AG04450 (cell line): ENCODE measurements at regions of chr2 and their contacts with region 1.

Region 1: DNA sequence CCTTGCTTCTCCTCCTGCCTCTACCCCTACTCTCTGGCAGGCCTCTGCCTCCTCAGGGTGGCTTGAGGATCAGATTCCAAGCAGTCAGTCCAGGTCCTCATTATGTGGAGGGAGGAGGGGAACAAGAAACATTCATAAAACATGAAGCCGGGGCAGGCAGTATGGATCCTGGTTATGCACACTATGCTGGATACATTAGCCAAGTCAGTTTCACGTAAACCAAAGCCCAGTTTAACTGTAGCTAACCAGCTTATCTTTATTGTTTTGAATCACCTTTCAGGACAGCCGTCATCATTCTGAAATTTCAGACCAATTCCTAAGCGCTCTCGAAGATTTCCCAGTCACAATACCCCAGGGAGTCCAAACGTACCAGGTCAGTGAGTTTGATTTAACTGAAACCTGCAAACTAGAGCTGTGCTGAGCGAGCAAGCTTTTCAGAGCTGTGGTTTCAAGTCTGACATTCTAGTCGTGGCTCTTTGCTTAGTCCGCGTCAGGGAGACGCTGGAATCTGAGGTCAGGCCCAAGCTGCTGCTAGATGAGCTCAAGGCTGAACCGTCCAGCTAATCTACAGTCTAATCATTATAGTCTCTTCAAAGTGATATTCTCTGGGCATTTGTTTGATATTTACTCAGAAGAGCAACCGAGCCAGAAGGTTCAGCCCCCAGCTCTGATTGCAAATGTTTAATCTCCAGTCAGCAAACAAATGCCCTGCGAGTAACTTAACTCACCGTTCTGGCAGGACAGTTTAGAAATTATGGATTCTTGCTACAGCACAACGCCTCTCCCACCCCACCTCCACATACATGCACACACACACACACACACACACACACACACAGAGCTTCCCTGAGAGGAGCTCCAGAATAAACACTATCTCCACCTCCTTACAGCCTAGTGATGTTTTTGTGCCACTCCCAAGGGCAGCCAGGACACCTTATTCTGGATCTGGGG is 63.8 kb upstream of the BZW1 start:
- DNase-seq: peak; percentile 85
- H3K4me3 ChIP-seq: peak overlapping the region; percentile 14
- H3K27ac ChIP-seq: peak overlapping the region; percentile 88
- H3K27me3 ChIP-seq: no peaks in the 10 kb centered on the region
- CTCF ChIP-seq: no peak

Region 2: DNA sequence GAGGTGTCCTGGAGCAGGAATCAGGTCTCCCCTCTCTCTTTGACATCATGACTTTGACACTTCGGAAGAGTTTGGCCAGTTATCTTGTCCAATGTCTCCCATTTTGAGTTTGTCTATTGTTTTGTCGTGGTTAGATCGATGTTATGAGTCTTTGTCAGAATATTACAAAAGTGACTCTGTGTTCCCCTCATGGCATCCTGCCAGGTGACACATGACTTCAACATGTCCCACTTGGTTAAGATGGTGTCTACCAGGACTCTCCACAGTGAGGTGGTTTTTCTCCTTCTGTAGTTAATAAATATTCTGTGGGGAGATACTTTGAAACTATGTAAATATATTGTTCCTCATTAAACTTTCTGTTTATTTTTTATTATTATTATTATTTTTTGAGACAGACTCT is 12.9 kb before region 1 on chr2:
- CTCF ChIA-PET with region 1: interaction called, 45 read pairs
- POLR2A ChIA-PET with region 1: interaction called, 7 read pairs
- DNase-seq: no peak
- H3K4me3 ChIP-seq: no peak overlapping the region
- H3K27ac ChIP-seq: no peak overlapping the region
- H3K27me3 ChIP-seq: peaks cover 18% of the 10 kb centered on the region
- CTCF ChIP-seq: no peak

Region 3: DNA sequence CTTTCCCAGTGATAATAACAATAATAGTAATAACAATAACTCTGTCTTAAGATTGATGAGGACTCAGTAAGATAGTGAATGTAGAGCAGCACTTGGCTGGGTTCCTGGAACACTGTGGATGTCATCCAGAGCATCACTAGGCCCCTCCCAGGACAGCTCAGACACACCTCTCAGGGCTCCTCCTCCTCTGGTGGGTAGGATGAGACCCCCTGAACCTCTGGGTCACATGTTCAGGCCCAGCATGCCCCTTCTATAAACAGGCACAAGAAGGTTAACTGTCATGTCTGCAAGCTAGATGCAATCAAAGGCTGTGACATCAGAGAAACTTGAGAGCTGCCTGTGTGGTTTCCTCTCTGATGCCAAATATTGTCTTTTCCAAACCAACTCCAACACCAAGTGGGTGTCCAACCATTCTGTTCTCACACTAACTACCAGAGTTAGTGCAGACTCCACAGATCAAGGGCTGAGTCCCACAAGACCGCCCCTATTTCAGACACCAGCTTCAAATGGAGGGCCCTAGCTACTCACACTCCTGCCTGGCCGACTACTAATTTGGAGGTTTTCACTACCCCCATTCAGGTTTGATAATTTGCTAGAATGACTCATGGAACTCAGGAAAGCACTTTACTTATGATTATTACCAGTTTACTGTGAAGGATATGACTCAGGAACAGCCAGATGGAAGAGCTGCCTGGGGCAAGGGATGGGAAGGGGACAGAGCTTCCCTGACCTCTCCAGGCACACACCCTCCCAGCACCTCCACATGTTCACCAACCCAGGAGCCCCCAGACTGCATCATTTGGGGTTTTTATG is 17.4 kb after region 1 on chr2:
- CTCF ChIA-PET with region 1: interaction called, 3 read pairs
- POLR2A ChIA-PET with region 1: interaction called, 12 read pairs
- DNase-seq: peak; percentile 81
- H3K4me3 ChIP-seq: peak overlapping the region; percentile 7; the same call in 1 of the 2 replicates
- H3K27ac ChIP-seq: peak overlapping the region; percentile 90
- H3K27me3 ChIP-seq: no peaks in the 10 kb centered on the region
- CTCF ChIP-seq: no peak

Region 4: GRCh38 chr2:200811336-200812121 is 63.6 kb after region 1 on chr2 and contains the start of gene BZW1:
- CTCF ChIA-PET with region 1: no interaction called
- POLR2A ChIA-PET with region 1: interaction called, 12 read pairs
- DNase-seq: peak; percentile 93
- H3K4me3 ChIP-seq: peak within 1 kb of the TSS; percentile 92
- H3K27ac ChIP-seq: peak within 1 kb of the TSS; percentile 99
- H3K27me3 ChIP-seq: no peaks in the 10 kb centered on the region
- CTCF ChIP-seq: no peak
- polyA plus RNA-seq, gene BZW1: 359 and 376 TPM in 2 replicates

Region 5: GRCh38 chr2:200864176-200864976 is 116.4 kb after region 1 on chr2 and contains the start of gene CLK1:
- CTCF ChIA-PET with region 1: no interaction called
- POLR2A ChIA-PET with region 1: interaction called, 10 read pairs
- DNase-seq: peak; percentile 81
- H3K4me3 ChIP-seq: peak within 1 kb of the TSS; percentile 76
- H3K27ac ChIP-seq: peak within 1 kb of the TSS; percentile 98
- H3K27me3 ChIP-seq: no peaks in the 10 kb centered on the region
- CTCF ChIP-seq: no peak
- polyA plus RNA-seq, gene CLK1: 66.0 and 103 TPM in 2 replicates

Region 6: GRCh38 chr2:201208563-201209252 is 460.8 kb after region 1 on chr2:
- CTCF ChIA-PET with region 1: no interaction called
- POLR2A ChIA-PET with region 1: no interaction called
- DNase-seq: no peak
- H3K4me3 ChIP-seq: no peak overlapping the region
- H3K27ac ChIP-seq: peak overlapping the region; percentile 2
- H3K27me3 ChIP-seq: no peaks in the 10 kb centered on the region
- CTCF ChIP-seq: no peak